ENCODE measurements at regions of chr9 and their contacts with region 1.

Region 1: DNA sequence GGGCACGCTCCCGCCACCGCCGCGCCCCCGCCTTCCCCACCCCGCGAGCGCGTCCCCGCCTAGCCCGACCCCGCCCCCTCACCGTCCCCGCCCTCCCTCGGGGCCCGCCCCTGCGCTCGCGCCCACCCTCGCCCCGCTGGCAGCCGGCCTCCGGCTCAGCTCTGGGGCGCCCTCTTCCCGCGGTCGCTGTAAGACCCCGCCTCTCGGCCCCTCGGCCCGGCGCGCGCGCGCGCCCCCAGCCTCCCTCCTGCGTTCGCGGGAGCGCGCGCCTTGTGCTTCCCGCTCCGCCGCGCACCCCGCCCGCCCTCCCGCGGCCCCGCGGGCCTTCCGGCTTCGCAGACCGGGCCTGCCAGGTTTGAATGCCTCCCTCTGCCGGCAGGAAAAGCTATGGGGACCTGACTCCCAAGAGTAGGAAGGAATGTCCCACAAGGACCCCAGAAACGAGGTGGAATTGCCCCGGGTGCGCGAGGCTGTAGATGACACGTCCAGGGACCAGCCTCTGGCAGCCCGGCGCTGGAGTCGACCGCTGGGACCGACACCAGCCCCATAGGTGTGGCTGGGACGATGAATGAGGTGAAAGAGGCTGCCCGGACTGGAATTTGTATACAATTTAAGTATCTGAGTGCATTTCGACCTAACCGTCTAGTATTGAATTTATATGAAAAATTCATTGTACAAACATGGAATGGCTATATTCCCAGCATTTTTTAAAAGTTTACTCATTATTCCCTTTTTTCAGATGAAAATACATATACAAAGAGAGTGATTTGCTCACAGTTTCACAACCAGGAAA is 416 bp upstream of the PTBP3 start:
- DNase-seq: peak; percentile 96
- H3K4me3 Mint-ChIP-seq: peak overlapping the region; percentile 92
- H3K27ac Mint-ChIP-seq: peak overlapping the region; percentile 99
- H3K4me1 Mint-ChIP-seq: peaks cover 28% of the 10 kb centered on the region
- H3K27me3 Mint-ChIP-seq: no peaks in the 10 kb centered on the region

Region 2: GRCh38 chr9:112097712-112098688 is 235.8 kb before region 1 on chr9:
- intact Hi-C with region 1: loop called (anchors 1 kb)
- DNase-seq: peak; percentile 91
- H3K4me3 Mint-ChIP-seq: no peak overlapping the region
- H3K27ac Mint-ChIP-seq: peak overlapping the region; percentile 23
- H3K4me1 Mint-ChIP-seq: peaks cover 29% of the 10 kb centered on the region
- H3K27me3 Mint-ChIP-seq: no peaks in the 10 kb centered on the region

Region 3: DNA sequence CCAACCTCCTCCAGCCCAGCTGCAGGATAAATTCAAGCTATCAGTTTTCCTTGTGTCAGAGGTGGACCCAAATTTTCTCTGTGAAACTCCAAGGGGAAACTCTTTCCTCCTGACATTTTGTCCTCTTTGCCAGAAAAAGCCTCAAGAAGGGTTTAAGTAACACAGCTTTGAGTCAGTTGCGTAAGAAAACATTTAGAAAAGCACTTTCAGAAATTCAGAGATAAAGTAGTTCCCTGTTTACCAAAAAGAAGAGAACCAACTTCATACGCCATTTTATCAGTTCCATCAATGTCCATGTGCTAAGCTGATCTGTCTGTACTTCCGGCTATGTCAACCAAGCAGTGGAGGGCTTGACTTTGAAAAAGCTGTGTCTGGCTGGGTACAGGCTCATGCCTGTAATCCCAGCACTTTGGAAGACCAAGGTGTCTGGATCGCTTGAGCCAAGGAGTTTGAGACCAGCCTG is 138.8 kb before region 1 on chr9:
- intact Hi-C with region 1: no loop called
- DNase-seq: no peak
- H3K4me3 Mint-ChIP-seq: no peak overlapping the region
- H3K27ac Mint-ChIP-seq: no peak overlapping the region
- H3K4me1 Mint-ChIP-seq: peaks cover 3% of the 10 kb centered on the region
- H3K27me3 Mint-ChIP-seq: no peaks in the 10 kb centered on the region

Region 4: DNA sequence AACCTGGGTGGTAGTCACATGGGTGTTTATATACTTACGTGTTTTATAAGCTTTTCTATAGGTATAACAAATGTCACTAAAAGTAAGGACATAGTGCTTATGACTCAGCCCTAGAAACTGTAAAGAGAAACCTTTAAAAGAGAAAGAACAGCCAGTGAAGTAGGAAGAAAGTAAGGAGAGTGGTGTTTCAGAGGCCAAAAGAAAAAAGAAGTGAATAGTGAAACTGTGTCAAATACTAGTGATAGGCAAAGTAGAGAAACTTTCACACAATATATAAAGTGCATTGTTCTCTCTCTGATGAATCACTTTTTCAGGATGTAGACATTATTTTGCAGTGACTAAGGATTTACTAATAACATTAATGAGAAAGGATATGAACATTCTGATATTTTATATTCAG is 84.6 kb before region 1 on chr9:
- intact Hi-C with region 1: loop called (anchors 2 kb)
- DNase-seq: no peak
- H3K4me3 Mint-ChIP-seq: no peak overlapping the region
- H3K27ac Mint-ChIP-seq: peak overlapping the region; percentile 3
- H3K4me1 Mint-ChIP-seq: peaks cover 21% of the 10 kb centered on the region
- H3K27me3 Mint-ChIP-seq: no peaks in the 10 kb centered on the region

Region 5: DNA sequence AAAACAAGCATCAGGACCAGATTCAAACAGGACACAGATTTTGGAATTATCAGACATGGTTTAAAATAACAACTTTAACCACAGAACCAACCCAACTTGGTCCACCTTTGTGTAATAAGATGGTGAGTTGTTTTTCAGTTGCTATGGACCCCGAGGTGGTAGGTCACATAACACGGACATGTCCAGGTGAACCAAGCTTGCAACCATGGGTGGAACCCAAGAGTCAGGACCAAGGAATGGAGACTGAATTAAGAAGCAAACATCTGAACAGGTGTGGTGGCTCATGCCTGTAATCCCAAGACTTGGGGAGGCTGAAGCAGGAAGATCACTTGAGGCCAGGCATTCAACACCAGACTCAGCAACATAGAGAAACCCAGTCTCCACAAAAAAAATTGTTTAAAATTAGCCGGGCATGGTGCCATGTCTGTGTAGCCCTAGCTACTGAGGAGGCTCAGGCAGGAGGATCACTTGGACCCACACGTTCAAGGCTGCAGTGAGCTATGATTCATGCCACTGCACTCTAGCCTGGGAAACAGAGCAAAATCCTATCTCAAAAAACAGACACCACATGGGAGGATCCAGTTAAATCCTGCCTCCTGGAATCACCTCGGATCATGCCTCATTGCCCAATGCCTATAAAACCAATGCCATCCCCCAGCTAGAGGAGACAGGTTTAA is 11.0 kb before region 1 on chr9:
- intact Hi-C with region 1: no loop called
- DNase-seq: no peak
- H3K4me3 Mint-ChIP-seq: no peak overlapping the region
- H3K27ac Mint-ChIP-seq: no peak overlapping the region
- H3K4me1 Mint-ChIP-seq: peaks cover 31% of the 10 kb centered on the region
- H3K27me3 Mint-ChIP-seq: no peaks in the 10 kb centered on the region

Region 6: DNA sequence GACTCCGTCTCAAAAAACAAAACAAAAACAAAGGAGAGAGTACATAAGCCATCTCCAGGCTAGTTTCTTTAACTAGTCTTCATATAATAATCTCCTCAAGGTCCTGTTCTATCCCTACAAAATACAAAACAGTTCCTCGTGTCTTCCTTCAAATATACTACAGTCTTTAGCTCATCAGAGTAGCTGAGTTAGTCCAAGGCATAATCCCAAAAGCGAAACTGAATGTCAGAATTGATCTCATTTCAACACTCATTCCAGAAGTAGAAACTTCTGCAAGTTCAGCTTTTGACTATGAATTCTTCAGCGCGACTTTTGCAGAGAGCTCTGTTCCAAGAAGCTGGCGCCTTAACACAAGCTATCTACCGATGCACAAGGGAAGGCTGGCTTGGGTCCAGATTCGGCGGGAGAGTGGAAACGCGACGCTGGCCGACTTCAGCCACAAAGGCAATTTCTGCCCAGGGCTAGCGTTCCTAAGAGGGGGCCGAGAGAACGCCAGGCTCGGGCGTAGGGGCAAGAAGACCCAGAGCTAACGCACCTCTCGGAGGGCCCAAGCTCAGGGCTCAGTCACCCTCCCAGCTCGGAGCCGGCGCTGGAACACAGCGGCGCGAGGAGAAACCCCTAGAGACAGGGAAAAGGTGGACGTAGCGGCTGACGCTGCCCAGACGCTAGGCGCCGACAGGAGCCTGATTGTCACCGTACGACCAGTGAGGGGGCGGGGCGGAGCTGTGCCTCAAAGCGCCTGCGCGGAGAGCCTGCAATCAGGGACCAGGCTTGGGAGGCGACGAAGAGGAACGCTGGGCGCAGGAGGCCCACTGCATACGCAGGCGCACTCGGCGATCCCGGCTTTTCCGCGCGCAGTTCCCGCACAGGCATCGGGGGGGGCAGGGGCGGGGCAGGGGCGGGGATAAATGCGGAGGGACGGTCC is 45.6 kb after region 1 on chr9:
- intact Hi-C with region 1: loop called (anchors 1 kb)
- DNase-seq: peak; percentile 100
- H3K4me3 Mint-ChIP-seq: peak overlapping the region; percentile 100
- H3K27ac Mint-ChIP-seq: peak overlapping the region; percentile 100
- H3K4me1 Mint-ChIP-seq: peaks cover 42% of the 10 kb centered on the region
- H3K27me3 Mint-ChIP-seq: no peaks in the 10 kb centered on the region

Region 7: GRCh38 chr9:112750111-112750767 is 416.4 kb after region 1 on chr9 and contains the start of gene SNX30:
- intact Hi-C with region 1: loop called (anchors 5 kb)
- DNase-seq: peak; percentile 95
- H3K4me3 Mint-ChIP-seq: peak within 1 kb of the TSS; percentile 82
- H3K27ac Mint-ChIP-seq: peak within 1 kb of the TSS; percentile 86
- H3K4me1 Mint-ChIP-seq: peaks cover 51% of the 10 kb centered on the region
- H3K27me3 Mint-ChIP-seq: peaks cover 4% of the 10 kb centered on the region
- total RNA-seq, gene SNX30: 2.6 and 2.9 TPM in 2 replicates

Region 8: DNA sequence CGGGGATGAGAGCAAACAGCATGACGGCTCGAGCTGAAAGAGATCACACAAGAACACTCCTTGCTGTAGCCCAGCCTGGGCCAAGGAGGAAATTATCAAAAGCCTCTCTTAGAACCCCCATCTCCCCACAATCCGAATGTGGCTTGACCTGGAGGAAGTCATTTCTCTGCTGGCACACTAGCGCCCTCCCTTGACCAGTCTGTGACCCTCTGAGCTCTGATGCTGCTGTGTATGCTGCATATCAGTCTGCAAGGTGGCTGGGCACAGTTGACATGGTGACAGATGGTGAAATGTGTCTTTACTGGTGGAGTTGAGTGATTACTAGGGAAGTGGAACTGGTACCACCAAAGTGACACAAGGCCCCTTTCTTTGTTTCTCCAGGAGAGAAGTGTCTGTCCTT is 553.5 kb after region 1 on chr9:
- intact Hi-C with region 1: no loop called
- DNase-seq: no peak
- H3K4me3 Mint-ChIP-seq: no peak overlapping the region
- H3K27ac Mint-ChIP-seq: no peak overlapping the region
- H3K4me1 Mint-ChIP-seq: no peaks in the 10 kb centered on the region
- H3K27me3 Mint-ChIP-seq: peaks cover 26% of the 10 kb centered on the region